ENCODE measurements at regions of chr18 and their contacts with region 1.

Region 1: DNA sequence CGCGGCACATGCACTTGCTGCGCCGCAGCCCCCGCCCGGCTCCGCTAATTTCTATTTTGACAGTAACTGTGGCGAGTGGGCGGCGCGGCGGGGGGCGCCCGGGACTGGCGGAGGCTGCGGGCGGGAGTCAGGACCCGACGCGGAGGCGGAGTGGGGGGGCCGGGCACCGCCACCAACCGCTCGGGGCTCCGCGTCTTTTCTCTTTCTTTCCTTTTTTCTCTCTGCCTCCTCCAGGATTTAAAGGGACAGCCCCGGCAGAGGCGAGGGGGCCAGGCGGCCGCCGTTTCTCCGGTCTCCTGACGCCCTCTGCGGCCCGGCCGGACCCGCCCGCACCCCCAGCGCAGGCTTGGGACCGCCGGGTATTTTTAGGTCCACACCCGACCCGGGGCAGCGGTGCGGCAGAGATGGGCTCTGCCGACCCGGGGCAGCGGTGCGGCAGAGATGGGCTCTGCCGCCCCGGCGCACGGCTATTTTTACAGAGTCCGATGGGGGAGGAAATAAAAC is 460 bp upstream of the ZBTB7C start:
- DNase-seq: peak; percentile 85 to 87
- H3K4me3 ChIP-seq: peak overlapping the region; percentile 16 to 68 (median 61)
- H3K27ac ChIP-seq: peak overlapping the region; percentile 63 to 87 (median 68)
- H3K4me1 ChIP-seq: peaks cover 18 to 34% of the 10 kb centered on the region in 2 donors
- H3K27me3 ChIP-seq: no peaks in the 10 kb centered on the region
- CTCF ChIP-seq: peak in 4 of 6 experiments; percentile 23 to 62 (median 40)
- POLR2A ChIP-seq: no peak

Region 2: DNA sequence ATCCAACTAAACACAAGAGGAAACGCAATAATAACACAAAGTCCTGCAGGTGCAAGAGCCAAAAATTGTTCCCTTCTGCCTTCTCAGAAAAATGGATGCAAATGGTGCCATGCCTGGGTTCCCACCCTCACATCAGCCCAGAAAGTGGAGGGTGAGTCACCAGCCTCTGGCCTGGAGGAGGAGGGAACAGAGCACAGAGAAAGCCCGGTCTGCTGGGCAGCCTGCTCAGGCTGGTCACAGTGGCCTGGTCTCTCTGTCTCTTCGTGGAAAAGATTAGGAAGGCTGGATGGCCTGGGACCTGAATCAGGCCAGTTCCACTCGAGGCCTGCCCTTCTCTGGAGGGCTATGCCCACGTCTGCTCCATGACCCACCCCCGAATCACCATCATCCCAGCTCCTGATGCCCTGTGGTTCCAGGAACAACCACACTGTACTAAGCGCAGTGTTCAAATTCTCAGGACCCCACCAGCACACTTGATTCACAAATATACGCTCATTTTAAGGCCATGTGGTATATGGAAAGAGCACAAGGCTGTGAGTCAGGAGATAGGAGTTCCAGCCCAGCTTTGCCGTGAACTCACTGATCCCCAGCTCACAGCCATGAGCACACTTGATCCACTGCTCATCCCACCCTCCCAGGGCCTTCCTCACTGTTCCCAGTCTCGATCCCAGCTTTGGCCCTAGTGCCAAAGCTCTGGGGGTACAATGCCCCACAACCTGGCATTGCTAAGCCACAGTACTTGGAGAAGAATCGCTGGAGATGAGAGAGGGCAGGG is 82.6 kb before region 1 on chr18:
- intact Hi-C with region 1: no loop called
- DNase-seq: peak in 1 of 2 donors; percentile 37
- H3K4me3 ChIP-seq: no peak overlapping the region
- H3K27ac ChIP-seq: peak overlapping the region in 2 of 3 donors; percentile 4 to 33
- H3K4me1 ChIP-seq: peaks cover 24 to 53% of the 10 kb centered on the region in 2 donors
- H3K27me3 ChIP-seq: no peaks in the 10 kb centered on the region
- CTCF ChIP-seq: no peak
- POLR2A ChIP-seq: no peak

Region 3: DNA sequence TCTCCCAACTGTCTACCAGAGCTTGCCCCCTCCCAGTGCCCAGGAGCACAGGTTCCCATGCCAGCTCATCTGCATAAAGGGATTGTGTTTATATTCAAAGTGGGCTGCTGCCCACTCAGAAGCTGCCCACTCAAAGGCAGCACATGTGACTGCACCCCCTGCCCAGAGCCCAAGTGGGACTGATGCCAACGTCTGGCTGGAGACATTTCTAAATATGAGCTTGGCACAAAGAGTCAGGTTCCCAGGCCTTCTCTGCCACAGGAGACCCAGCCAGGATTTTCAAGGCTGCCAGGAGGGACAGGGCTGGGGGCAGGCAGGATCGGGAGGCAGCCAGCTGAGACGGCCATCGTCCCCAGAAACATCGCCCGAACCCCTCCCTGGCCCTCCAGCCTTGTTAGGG is 67.5 kb before region 1 on chr18:
- intact Hi-C with region 1: loop called (anchors 5 kb)
- DNase-seq: peak; percentile 90 to 94
- H3K4me3 ChIP-seq: peak overlapping the region in 1 of 3 donors; percentile 2
- H3K27ac ChIP-seq: peak overlapping the region; percentile 65 to 90 (median 72)
- H3K4me1 ChIP-seq: peaks cover 36 to 76% of the 10 kb centered on the region in 2 donors
- H3K27me3 ChIP-seq: no peaks in the 10 kb centered on the region
- CTCF ChIP-seq: no peak
- POLR2A ChIP-seq: no peak

Measured in thyroid gland (tissue), 4 donors.